HEK293 (cell line): ENCODE measurements at regions of chr10 and their contacts with region 1.

Region 1: GRCh38 chr10:97072851-97073665 is 112.7 kb downstream of the SLIT1 start:
- H3K4me3 ChIP-seq: no peak overlapping the region
- H3K27ac ChIP-seq: no peak overlapping the region
- H3K4me1 ChIP-seq: no peaks in the 10 kb centered on the region
- CTCF ChIP-seq: peak; percentile 76

Region 2: DNA sequence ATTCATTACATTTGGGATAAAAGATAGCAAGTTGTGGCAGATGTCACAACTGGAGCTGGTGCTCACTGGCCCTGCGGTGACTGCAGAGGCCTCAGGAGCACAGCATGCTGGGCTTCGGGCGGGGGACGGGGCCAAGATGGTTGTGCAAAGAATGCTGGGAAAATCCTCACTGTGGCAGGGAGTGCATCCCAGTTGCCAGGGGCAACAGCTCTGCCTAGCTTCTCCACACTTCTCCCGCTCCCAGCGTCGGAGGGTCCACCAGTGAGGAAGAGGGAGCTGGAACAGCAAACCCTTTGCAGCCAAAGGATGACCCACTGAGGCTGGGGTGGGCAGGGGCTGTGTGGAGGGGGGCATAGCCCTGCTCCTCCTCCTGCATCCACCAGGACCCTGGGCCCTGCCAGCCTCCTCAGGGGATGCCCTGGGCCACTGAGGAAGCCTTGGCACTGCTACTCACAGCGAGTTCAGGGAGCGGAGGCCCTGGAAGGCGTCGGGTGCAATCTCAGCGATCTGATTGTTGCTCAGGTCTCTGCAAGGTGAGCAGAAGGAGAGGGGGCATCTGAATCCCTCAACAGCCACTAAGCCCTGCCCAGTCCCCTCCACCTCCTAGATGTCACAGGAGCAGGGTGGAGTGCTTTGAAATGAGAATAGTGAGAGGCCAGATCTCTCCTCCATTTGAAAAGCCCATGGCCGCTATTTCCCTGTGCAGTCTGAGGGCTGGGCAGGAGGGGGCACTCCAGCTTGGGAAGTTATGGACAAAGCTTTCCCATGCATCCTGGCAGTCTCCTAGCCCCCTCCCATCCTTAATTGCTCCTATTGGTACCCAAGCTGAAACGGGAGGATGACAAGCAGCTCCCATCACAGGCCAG is 13.8 kb before region 1 on chr10:
- CTCF ChIA-PET with region 1: interaction called, 46 read pairs
- POLR2A ChIA-PET with region 1: no interaction called
- H3K4me3 ChIP-seq: no peak overlapping the region
- H3K27ac ChIP-seq: no peak overlapping the region
- H3K4me1 ChIP-seq: no peaks in the 10 kb centered on the region
- CTCF ChIP-seq: no peak

Region 3: DNA sequence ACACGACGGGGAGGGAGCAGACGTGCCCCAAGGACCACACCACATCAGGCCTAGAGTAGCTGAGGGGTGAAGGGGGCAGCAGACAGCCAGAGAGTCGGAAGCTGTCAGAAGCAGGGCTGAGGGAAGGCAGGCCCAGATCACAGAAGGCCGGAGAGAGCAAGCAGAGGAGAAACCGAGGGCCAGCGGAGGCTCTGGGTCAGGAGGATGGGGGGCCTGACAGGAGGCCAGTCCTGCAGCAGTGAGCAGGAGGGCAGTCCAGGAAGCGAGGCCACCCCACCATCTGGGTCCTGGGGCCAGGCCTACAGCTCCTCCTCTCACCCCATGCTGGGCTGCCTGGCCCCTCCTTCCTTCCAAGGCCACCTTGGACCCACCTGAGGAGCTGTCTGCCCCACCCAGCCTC is 92.4 kb after region 1 on chr10:
- CTCF ChIA-PET with region 1: no interaction called
- POLR2A ChIA-PET with region 1: no interaction called
- H3K4me3 ChIP-seq: no peak overlapping the region
- H3K27ac ChIP-seq: no peak overlapping the region
- H3K4me1 ChIP-seq: no peaks in the 10 kb centered on the region; the same call in 1 of the 2 replicates
- CTCF ChIP-seq: no peak

Region 4: DNA sequence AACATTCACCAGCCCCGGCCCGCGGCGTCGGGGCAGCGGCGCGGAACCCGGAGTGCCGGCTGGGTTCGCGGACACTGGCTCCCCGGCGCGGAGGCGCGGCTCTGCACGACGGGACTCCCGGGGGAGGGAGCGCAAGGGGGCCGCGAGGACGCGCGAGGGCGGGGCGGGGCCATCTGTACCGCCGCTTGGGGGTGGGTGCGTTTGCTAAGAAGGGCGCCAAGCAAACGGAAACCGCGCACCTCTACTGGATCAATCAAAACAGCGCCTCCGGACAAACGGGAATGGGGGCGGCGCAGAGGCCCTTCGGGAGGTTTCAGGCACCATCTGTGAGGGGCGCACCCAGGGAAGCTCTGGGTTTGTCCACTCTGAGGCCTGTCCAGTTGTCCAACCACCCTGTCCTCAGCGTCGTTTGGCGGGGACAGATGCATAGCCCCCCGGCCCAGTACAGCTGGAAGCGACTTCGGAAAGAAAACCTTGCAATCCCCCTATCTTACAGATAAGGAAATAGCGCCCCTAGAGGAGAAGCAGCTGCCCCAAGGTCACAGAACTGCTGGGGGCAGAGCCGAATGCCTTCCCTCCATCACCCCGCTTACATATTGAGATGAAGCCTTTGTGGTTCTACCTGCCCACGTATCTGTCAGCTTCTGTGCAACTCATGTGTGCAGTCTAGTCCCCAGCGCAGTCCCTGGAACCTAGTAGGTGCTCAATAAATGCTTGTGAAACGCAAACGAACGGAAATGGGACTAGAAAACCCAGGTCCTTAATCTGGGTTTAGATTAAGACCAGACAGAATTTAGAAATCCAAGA is 123.4 kb after region 1 on chr10:
- CTCF ChIA-PET with region 1: interaction called, 59 read pairs
- POLR2A ChIA-PET with region 1: no interaction called
- H3K4me3 ChIP-seq: peak overlapping the region; percentile 48
- H3K27ac ChIP-seq: no peak overlapping the region
- H3K4me1 ChIP-seq: peaks cover 3% of the 10 kb centered on the region
- CTCF ChIP-seq: peak; percentile 78

Region 5: DNA sequence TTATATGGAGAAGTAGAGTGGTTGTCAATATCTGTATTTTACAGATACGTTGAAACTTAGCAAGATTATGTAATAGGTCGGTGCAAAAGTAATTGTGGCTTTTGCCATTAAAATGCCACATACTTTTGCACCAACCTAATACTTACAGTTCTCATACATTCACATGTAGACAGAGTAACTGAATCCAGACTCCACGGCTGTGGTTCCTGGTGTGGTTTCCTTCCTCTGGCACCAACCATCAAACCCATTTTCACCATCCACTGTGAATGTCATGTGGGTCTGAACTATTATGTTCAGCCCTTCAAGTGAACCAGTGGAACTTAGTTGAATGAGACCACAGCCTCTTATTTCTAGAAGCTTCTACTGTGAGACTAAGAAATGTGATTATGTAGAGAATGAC is 144.2 kb after region 1 on chr10:
- CTCF ChIA-PET with region 1: interaction called, 188 read pairs
- POLR2A ChIA-PET with region 1: no interaction called
- H3K4me3 ChIP-seq: no peak overlapping the region
- H3K27ac ChIP-seq: no peak overlapping the region
- H3K4me1 ChIP-seq: no peaks in the 10 kb centered on the region
- CTCF ChIP-seq: no peak

Region 6: DNA sequence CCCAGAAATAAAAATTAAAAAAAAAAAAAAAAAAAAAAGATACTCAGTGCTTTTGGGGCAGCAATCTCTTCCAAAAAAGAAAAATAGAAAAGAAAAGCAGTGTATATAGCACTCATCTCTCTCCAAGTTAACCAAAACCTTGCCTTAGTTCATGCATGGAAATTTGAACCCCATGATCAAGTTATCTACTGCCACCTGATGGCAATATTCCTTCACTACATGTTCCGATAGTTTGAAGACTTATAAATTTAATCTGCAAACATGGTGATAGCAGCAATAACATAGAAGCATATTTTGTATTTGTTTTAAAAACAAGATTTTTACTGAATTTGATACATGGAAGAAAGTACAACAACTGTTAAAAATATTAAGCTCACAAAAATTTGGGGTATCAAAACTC is 161.3 kb after region 1 on chr10:
- CTCF ChIA-PET with region 1: interaction called, 69 read pairs
- POLR2A ChIA-PET with region 1: no interaction called
- H3K4me3 ChIP-seq: no peak overlapping the region
- H3K27ac ChIP-seq: no peak overlapping the region
- H3K4me1 ChIP-seq: no peaks in the 10 kb centered on the region
- CTCF ChIP-seq: 0 out of 2 replicates have a peak, but pooled peaks have one; percentile 21

Region 7: DNA sequence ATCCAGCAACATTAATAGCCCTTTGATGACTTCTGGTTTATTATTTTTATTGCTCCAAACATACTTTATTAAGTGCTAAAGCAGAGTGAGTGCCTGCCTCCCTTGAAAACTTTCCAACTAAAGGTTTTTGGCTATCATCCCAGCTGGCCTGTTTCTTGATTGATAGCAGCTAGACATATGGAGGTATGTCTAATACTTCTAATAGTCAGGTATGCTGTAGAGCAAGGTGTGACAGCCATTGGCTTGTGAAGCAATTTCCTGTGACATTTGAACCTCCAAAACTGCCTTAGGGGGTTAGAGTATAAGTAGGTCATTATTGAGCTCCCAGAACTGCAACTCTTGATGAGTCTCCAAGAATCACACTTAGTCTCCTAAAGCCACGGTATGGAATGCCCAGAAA is 1139.1 kb after region 1 on chr10:
- CTCF ChIA-PET with region 1: no interaction called
- POLR2A ChIA-PET with region 1: no interaction called
- H3K4me3 ChIP-seq: no peak overlapping the region
- H3K27ac ChIP-seq: no peak overlapping the region
- H3K4me1 ChIP-seq: no peaks in the 10 kb centered on the region
- CTCF ChIP-seq: no peak